Pancreas (tissue), 10 donors: ENCODE measurements at regions of chr1 and their contacts with region 1.

Region 1: DNA sequence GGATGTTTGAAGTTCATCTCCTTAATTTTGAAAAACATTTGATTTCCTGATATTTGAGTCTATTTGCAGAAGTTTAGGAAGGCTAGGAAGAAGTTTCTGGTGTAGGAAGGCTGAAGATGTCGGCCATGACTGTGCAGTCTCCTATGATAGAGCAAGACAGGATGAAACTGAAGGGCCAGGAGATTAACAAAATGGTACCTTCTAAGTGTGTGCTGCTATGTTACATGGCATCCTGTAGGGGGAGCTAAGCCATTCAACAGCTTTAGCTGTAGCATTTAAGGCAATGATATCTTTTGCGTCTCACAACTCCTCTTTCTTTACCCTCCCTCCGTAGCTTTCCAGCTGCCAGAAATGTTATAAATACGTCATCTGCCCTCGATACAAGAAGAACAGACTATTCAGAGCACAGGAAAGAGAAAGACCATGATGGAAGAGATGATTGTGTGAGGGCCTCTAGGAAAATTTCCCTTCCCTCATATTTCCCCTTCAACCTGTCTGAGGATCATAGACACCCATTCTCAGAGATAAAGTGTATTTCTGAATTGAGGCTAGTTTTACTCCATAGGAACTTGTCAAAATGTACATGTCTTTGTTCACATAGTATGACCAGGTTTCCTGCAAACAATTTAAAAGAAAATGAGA is 61.1 kb downstream of the XCL1 start:
- DNase-seq: no peak
- ATAC-seq: peak; percentile 83 to 89 (median 88)
- H3K4me3 ChIP-seq: no peak overlapping the region
- H3K27ac ChIP-seq: peak overlapping the region in 1 of 4 donors; percentile 52
- H3K4me1 ChIP-seq: peaks cover 0 to 13% (median 0%) of the 10 kb centered on the region in 3 donors
- H3K27me3 ChIP-seq: no peaks in the 10 kb centered on the region
- CTCF ChIP-seq: peak; percentile 36 to 61 (median 42)

Region 2: DNA sequence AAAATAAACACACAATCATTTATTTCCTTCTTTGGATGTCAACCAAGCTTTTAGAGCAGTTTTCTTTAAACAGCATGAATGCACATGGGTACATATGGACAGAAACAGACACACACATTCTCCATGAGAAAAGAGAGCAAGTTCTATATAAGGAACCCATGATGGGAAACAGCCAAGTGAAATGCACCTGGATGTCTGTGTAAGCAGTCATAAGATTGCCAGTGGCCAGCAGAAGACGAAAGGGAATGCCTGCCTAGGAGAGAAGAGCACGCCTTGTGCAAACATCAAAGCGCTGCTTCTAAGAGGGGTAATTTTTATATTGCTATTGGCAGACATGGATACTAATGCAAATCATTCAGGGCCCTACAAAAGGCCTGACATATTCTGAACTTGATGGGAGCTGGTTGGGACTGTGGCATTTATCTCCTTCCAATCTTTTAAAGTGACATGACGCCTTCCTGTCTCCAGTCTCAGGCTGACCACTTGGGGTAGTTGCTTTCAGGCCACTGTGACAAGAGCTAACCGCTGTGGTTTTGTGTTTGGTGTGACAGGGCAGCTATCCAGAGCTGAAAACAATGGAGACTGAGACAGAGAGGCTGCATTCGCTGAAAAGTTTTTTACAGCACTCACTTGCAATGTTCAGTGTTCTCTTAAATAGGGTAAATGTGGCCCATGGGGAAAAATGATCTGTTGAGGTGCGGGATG is 166.5 kb after region 1 on chr1:
- intact Hi-C with region 1: no loop called
- DNase-seq: peak in 2 of 6 donors; percentile 4 to 22
- ATAC-seq: peak in 3 of 4 donors; percentile 31 to 53 (median 34)
- H3K4me3 ChIP-seq: no peak overlapping the region
- H3K27ac ChIP-seq: no peak overlapping the region
- H3K4me1 ChIP-seq: peaks cover 35 to 53% (median 53%) of the 10 kb centered on the region in 3 donors
- H3K27me3 ChIP-seq: no peaks in the 10 kb centered on the region
- CTCF ChIP-seq: no peak

Region 3: DNA sequence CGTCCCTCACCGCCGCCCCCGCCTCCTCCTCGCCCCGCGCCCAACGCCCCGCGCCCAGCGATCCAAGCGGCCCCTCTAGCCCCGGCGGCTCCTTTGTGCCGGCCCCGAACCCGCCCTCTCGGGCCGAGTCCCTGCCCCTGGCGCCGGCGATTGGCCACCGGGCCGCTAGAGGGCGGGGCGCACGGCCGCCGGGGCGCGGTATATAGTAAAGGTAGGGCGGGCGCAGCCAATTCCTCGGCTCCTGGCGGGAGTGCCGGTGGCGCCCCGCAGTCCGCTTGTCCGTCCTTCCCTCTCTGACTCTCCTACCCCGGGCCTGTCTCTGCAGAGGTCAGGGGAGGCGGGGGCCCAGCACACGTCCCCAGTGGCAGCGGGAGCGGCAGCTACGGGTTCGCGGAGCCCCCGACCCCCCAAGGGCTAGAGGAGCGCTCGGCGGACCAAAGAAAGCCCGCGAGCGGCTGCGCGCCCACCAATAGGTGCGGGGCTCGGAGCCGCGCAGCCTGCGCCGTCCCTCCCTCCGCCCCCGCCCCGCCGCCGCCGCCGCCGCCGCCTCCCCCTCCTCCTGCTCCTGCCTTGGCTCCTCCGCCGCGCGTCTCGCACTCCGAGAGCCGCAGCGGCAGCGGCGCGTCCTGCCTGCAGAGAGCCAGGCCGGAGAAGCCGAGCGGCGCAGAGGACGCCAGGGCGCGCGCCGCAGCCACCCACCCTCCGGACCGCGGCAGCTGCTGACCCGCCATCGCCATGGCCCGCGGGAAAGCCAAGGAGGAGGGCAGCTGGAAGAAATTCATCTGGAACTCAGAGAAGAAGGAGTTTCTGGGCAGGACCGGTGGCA is 468.8 kb after region 1 on chr1 and contains the start of gene ATP1B1:
- intact Hi-C with region 1: loop called in 1 of 3 experiments (anchors 10 kb)
- DNase-seq: peak; percentile 86 to 98 (median 93)
- ATAC-seq: peak; percentile 78 to 85 (median 81)
- H3K4me3 ChIP-seq: peak within 1 kb of the TSS; percentile 80 to 96 (median 93)
- H3K27ac ChIP-seq: peak within 1 kb of the TSS; percentile 90 to 98 (median 94)
- H3K4me1 ChIP-seq: peaks cover 17 to 29% (median 22%) of the 10 kb centered on the region in 3 donors
- H3K27me3 ChIP-seq: no peaks in the 10 kb centered on the region
- CTCF ChIP-seq: peak; percentile 34 to 70 (median 63)
- total RNA-seq, gene ATP1B1: 95.0 to 213 (median 192) TPM